Activated CD8-positive, alpha-beta T cell treated with anti-CD3 and anti-CD28 coated beads for 36 hours (primary cell): ENCODE measurements at regions of chr7 and their contacts with region 1.

Region 1: DNA sequence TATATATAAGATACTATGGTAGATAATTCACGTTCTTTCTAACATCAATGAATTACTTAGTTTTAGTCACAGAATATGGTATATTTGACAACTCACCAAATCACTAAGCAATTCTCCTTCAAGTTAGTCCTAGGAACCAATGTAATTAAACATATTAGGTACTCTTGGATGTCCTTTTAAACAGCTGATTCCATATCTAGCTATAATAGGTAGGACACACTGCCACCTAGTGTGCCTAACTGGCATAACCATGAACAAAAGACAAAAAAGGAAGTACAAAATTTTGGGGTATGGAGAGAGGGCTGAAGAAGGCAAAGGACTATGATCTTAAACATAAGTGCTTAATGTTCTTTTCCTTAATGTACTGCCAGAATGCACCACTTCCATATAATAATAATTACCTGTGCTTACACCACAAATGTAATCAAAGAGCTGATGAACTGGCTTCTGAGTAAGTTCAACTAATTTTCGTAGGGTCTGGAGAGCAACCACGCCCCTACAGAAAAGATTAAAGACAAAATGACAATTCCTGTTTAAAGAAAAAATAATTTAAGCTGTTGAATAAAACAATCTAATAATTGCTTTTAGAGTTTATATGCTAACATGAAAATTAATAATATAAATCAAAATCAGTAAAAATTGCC is 28.7 kb downstream of the PNPLA8 start:
- DNase-seq: peak; percentile 69
- ATAC-seq: peak; percentile 75
- H3K4me3 Mint-ChIP-seq: no peak overlapping the region
- H3K27ac Mint-ChIP-seq: no peak overlapping the region
- H3K4me1 Mint-ChIP-seq: no peaks in the 10 kb centered on the region
- H3K27me3 Mint-ChIP-seq: no peaks in the 10 kb centered on the region
- CTCF ChIP-seq: peak; percentile 85

Region 2: GRCh38 chr7:108181073-108181985 is 315.9 kb before region 1 on chr7:
- CTCF ChIA-PET with region 1: interaction called, 23 read pairs
- POLR2A ChIA-PET with region 1: no interaction called
- intact Hi-C with region 1: loop called (anchors 1 kb)
- DNase-seq: no peak
- ATAC-seq: peak; percentile 62
- H3K4me3 Mint-ChIP-seq: no peak overlapping the region
- H3K27ac Mint-ChIP-seq: no peak overlapping the region
- H3K4me1 Mint-ChIP-seq: no peaks in the 10 kb centered on the region
- H3K27me3 Mint-ChIP-seq: no peaks in the 10 kb centered on the region
- CTCF ChIP-seq: peak; percentile 81

Region 3: GRCh38 chr7:108384721-108385481 is 112.3 kb before region 1 on chr7:
- CTCF ChIA-PET with region 1: no interaction called
- POLR2A ChIA-PET with region 1: no interaction called
- intact Hi-C with region 1: no loop called
- DNase-seq: no peak
- ATAC-seq: peak; percentile 82
- H3K4me3 Mint-ChIP-seq: no peak overlapping the region
- H3K27ac Mint-ChIP-seq: no peak overlapping the region
- H3K4me1 Mint-ChIP-seq: peaks cover 15% of the 10 kb centered on the region
- H3K27me3 Mint-ChIP-seq: no peaks in the 10 kb centered on the region
- CTCF ChIP-seq: peak; percentile 44

Region 4: GRCh38 chr7:108452722-108453121 is 44.5 kb before region 1 on chr7:
- CTCF ChIA-PET with region 1: interaction called, 26 read pairs
- POLR2A ChIA-PET with region 1: no interaction called
- intact Hi-C with region 1: loop called (anchors 5 kb)
- DNase-seq: peak; percentile 32
- ATAC-seq: peak; percentile 38
- H3K4me3 Mint-ChIP-seq: no peak overlapping the region
- H3K27ac Mint-ChIP-seq: no peak overlapping the region
- H3K4me1 Mint-ChIP-seq: peaks cover 38% of the 10 kb centered on the region
- H3K27me3 Mint-ChIP-seq: peaks cover 13% of the 10 kb centered on the region
- CTCF ChIP-seq: peak; percentile 71

Region 5: GRCh38 chr7:108468246-108468645 is 29.0 kb before region 1 on chr7:
- CTCF ChIA-PET with region 1: interaction called, 12 read pairs
- POLR2A ChIA-PET with region 1: interaction called, 7 read pairs
- intact Hi-C with region 1: no loop called
- DNase-seq: no peak
- ATAC-seq: no peak
- H3K4me3 Mint-ChIP-seq: no peak overlapping the region
- H3K27ac Mint-ChIP-seq: no peak overlapping the region
- H3K4me1 Mint-ChIP-seq: peaks cover 28% of the 10 kb centered on the region
- H3K27me3 Mint-ChIP-seq: no peaks in the 10 kb centered on the region
- CTCF ChIP-seq: no peak

Region 6: DNA sequence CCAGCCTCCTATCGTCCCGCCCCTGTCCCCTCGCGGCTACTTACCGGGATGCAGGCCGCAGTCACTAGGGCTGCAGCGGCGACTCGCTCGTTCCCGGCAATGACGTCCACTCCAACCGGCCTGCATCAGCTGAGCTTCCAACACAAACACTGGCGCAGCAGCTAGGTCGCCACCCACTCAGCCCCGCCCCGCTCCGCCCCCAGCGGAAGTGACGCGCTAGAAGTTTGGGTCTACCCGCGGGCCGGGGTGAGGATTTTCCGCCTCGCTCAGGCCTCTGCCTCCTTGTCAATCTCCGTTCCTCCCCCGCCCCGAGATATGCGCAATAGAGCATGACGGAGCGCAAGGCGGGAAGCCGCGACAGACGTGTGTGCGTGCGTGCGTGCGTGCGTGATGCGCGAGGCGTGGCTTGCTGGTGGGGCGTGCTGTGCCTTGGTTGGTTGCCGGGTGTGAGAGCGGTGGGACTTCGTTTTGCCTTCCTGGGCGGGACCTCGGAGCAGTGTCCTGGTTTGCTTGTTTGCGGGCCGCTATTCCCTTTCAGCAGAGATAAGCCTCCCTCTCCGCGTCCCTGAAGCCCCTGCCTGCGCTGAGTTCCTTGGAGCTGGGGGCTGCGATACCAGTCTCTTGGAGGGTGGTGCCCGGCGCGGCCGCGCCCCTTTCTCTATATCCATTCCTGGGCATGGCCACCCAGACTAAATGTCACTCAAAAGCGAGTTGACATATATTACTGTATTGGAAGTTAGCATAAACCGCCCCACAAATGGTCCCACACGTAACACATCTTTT is 29.0 kb after region 1 on chr7 and contains the start of gene PNPLA8:
- CTCF ChIA-PET with region 1: interaction called, 10 read pairs
- POLR2A ChIA-PET with region 1: interaction called, 3 read pairs
- intact Hi-C with region 1: no loop called
- DNase-seq: peak; percentile 100
- ATAC-seq: peak; percentile 93
- H3K4me3 Mint-ChIP-seq: peak within 1 kb of the TSS; percentile 85
- H3K27ac Mint-ChIP-seq: peak within 1 kb of the TSS; percentile 98
- H3K4me1 Mint-ChIP-seq: peaks cover 44% of the 10 kb centered on the region
- H3K27me3 Mint-ChIP-seq: no peaks in the 10 kb centered on the region
- CTCF ChIP-seq: no peak
- total RNA-seq, gene PNPLA8: 19.2 to 21.4 TPM

Region 7: GRCh38 chr7:108613112-108613759 is 116.0 kb after region 1 on chr7:
- CTCF ChIA-PET with region 1: no interaction called
- POLR2A ChIA-PET with region 1: no interaction called
- intact Hi-C with region 1: no loop called
- DNase-seq: no peak
- ATAC-seq: peak; percentile 67
- H3K4me3 Mint-ChIP-seq: no peak overlapping the region
- H3K27ac Mint-ChIP-seq: no peak overlapping the region
- H3K4me1 Mint-ChIP-seq: no peaks in the 10 kb centered on the region
- H3K27me3 Mint-ChIP-seq: peaks cover 1% of the 10 kb centered on the region
- CTCF ChIP-seq: peak; percentile 78